ENCODE measurements at regions of chr7 and their contacts with region 1.

Region 1: DNA sequence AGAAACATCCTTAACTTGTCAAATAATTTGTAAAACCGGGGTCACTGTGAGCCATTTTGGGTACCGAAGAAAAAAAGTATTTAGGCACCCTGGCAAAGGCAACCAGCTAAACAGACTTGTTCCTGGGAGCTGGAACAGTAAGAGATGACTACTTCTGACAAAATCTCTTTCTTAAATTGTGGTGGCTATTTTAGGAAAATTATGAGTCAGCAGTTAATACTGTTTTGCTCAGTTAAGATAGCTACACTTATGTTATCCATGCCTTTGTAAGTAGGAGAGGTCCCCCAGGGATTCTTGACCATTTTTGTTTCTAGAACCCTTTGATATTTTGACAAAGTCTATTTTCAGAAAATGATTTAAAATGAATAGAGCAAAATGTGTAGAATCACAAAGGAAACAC is 68.7 kb downstream of the TAX1BP1 start:
- DNase-seq: no peak
- ATAC-seq: no peak
- H3K4me3 ChIP-seq: no peak overlapping the region
- H3K4me3 Mint-ChIP-seq: no peak overlapping the region
- H3K27ac ChIP-seq: no peak overlapping the region
- H3K27ac Mint-ChIP-seq: no peak overlapping the region
- H3K4me1 ChIP-seq: no peaks in the 10 kb centered on the region
- H3K4me1 Mint-ChIP-seq: peaks cover 0 to 24% (median 10%) of the 10 kb centered on the region in 7 donors
- H3K27me3 ChIP-seq: no peaks in the 10 kb centered on the region
- H3K27me3 Mint-ChIP-seq: no peaks in the 10 kb centered on the region

Region 2: DNA sequence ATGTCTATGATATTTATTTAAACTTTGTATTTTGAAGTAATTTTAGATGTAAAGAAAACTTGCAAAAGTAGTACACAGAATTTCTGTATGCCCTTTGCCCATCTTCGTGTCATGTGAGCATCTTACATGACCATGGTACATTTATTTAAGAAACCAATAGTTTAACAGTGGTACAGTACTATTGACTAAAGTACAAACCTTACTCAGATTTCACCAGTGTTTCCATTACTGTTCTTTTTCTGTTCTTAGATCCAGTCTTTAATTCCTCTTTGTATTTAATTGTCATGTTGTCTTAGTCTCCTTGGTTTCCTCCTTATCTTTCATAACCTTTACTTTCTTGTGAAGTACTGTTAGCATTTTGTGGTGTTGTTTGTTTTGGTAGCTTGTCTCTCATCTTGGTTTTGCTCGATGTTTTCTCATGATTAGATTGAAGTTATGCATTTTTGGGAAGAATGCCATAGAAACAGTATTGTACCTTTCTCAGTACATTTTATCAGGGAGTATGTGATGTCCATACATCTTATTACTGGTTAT is 44.6 kb before region 1 on chr7:
- CTCF ChIA-PET with region 1: no interaction called
- POLR2A ChIA-PET with region 1: no interaction called
- intact Hi-C with region 1: loop called in 1 of 2 experiments (anchors 5 kb)
- DNase-seq: no peak
- ATAC-seq: no peak
- H3K4me3 ChIP-seq: no peak overlapping the region
- H3K4me3 Mint-ChIP-seq: peak overlapping the region in 1 of 10 donors; percentile 7
- H3K27ac ChIP-seq: no peak overlapping the region
- H3K27ac Mint-ChIP-seq: peak overlapping the region in 2 of 9 donors; percentile 6 to 40
- H3K4me1 ChIP-seq: no peaks in the 10 kb centered on the region
- H3K4me1 Mint-ChIP-seq: peaks cover 4 to 56% (median 45%) of the 10 kb centered on the region in 7 donors
- H3K27me3 ChIP-seq: no peaks in the 10 kb centered on the region
- H3K27me3 Mint-ChIP-seq: no peaks in the 10 kb centered on the region

Region 3: DNA sequence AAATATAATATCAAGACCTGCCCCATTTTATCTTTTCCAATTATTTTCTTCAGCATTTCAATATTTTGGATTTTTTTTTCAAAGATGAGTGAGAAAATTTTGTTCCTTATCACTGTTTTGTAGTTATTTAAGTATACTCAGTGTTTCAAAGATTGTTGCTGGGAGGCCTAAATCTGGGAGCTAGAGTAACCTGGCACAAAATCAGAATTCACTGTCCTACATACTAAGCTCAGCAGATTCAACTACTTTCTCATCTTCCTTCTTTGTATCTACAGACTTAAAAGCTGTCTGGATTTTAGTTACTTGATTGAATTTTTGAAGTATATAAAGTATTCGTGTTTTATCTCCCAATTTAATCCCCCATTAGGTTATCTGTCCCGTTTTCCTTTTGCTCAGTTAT is 17.3 kb after region 1 on chr7:
- CTCF ChIA-PET with region 1: no interaction called
- POLR2A ChIA-PET with region 1: interaction called, 3 read pairs
- intact Hi-C with region 1: loop called in 1 of 2 experiments (anchors 2 kb)
- DNase-seq: no peak
- ATAC-seq: no peak
- H3K4me3 ChIP-seq: no peak overlapping the region
- H3K4me3 Mint-ChIP-seq: no peak overlapping the region
- H3K27ac ChIP-seq: no peak overlapping the region
- H3K27ac Mint-ChIP-seq: peak overlapping the region in 2 of 9 donors; percentile 7 to 41
- H3K4me1 ChIP-seq: no peaks in the 10 kb centered on the region
- H3K4me1 Mint-ChIP-seq: peaks cover 0 to 4% (median 0%) of the 10 kb centered on the region in 7 donors
- H3K27me3 ChIP-seq: no peaks in the 10 kb centered on the region
- H3K27me3 Mint-ChIP-seq: no peaks in the 10 kb centered on the region

Region 4: DNA sequence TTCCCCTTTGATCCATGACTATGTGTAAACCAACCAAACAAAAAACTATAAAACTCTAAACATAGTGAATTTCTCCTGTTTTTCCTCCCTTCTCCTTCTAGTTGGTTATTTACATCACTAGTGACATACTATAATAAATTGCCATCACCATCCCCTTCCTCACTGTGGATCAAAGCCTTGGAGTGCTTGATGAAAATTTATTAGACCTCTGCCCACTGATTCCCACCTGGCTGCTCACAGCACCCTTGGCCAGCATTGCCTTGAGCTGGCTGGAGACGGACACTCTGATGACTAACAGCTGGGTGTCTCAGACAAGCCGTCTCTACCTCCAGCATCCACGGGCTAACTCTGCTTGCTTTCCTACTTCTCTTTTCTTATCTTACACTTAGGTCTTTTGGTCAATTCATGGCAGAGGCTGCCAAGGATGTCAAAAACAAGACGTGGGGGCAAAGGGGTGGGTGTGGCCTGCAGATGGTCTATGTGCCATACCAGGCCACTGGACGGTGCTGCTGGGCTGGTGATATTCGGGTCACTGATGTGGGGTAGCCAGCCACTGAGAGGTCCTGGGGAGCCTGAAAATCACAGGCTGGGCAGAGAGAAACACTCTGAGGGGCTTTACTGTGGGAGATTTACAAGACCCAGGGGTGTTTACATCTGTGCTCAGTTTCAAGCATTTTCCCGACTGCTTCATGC is 139.1 kb after region 1 on chr7:
- CTCF ChIA-PET with region 1: no interaction called
- POLR2A ChIA-PET with region 1: no interaction called
- intact Hi-C with region 1: no loop called
- DNase-seq: no peak
- ATAC-seq: no peak
- H3K4me3 ChIP-seq: no peak overlapping the region
- H3K4me3 Mint-ChIP-seq: no peak overlapping the region
- H3K27ac ChIP-seq: no peak overlapping the region
- H3K27ac Mint-ChIP-seq: no peak overlapping the region
- H3K4me1 ChIP-seq: peaks cover 0 to 16% of the 10 kb centered on the region in 2 donors
- H3K4me1 Mint-ChIP-seq: peaks cover 4 to 41% (median 31%) of the 10 kb centered on the region in 7 donors
- H3K27me3 ChIP-seq: no peaks in the 10 kb centered on the region
- H3K27me3 Mint-ChIP-seq: peaks cover 0 to 6% (median 0%) of the 10 kb centered on the region in 5 donors